ENCODE measurements at regions of chr9 and their contacts with region 1.

Region 1: DNA sequence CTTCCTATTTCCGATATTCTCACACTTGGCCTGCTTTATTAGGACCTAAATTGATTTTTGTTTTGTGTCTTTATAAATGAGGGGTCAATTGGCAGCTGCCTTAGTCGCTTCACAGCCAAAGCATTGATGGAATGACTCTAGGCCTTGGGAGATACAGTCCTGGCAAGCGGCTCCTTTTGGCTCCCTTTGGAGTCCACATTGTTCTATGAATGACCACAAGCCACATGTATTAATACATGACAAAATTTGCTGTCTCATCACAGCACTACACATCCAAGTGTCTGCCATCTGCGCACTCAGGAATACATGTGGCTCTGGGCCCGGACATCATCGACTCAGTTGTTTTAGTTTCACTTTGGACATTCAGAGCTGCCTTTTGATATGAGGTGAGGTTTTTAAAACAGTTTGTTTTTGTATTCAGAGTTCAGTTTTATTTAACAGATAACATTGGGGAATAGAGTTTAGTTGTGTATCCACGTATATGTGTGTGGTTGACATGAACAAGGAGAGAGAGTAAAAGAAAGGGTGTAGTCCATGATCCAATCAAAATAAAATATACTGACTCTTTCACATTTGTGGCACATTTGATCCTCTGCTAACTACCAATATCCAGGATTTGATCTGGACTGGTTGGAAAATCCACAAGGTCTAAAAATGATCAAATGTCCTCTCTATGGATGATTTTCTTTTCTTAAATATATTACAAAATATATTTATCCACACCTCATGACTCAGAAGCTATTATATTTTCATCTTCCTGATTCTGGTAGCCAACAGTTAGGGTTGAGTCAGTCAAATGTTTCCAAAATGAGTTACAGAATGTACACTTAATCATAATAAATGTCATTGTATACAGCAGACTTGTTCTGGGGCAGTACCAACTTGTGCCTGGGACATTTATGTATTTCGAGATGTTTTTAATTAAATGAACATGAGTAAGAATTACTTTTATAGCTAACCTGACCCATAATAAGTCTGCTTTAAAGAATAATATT is 114.0 kb upstream of the MTAP start:
- DNase-seq: no peak
- H3K4me3 ChIP-seq: no peak overlapping the region
- H3K27ac ChIP-seq: no peak overlapping the region
- H3K4me1 ChIP-seq: no peaks in the 10 kb centered on the region
- H3K27me3 ChIP-seq: no peaks in the 10 kb centered on the region
- CTCF ChIP-seq: no peak

Region 2: DNA sequence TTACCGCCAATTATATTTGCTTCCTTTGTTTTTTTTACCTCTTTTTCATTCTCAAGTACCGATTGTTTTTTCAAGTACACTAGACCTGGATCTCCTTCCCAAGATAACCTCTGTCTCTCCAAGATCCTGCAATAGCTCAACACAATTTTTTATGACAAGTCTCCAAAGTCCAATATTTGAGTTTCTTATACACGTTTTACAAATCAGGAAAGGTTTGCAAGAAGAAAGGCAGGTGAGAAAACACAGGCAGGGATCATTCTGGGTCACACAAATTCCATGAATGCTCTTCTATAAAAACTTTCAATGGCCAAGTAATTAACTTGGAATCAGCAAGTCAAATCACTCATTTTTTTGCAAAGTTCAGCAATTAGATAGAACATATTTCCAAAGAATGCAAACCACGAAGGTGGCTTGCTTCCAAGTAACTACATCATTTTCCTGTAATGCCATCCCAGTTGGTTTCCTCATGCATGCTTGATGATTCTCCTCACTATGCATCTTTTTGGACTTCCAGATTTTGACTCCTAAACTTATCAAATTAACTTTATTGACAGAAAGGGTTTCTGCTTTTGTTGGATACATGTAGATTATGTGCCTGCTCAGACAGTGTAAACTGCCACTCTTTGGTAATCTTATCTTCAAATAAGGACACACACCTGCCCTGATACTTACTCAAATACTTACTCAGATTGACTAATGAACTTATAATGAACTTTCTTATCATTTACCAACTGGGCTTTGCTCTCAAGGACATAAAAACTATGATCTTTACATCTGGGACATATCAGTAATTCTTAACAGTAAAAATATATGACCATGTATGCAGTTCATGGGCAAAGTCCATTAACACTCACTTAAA is 181.6 kb before region 1 on chr9:
- intact Hi-C with region 1: loop called (anchors 10 kb)
- DNase-seq: no peak
- H3K4me3 ChIP-seq: no peak overlapping the region
- H3K27ac ChIP-seq: no peak overlapping the region
- H3K4me1 ChIP-seq: no peaks in the 10 kb centered on the region
- H3K27me3 ChIP-seq: no peaks in the 10 kb centered on the region
- CTCF ChIP-seq: no peak

Region 3: GRCh38 chr9:21542787-21543186 is 145.6 kb before region 1 on chr9:
- intact Hi-C with region 1: no loop called
- DNase-seq: no peak
- H3K4me3 ChIP-seq: no peak overlapping the region
- H3K27ac ChIP-seq: no peak overlapping the region
- H3K4me1 ChIP-seq: no peaks in the 10 kb centered on the region
- H3K27me3 ChIP-seq: no peaks in the 10 kb centered on the region
- CTCF ChIP-seq: no peak

Region 4: DNA sequence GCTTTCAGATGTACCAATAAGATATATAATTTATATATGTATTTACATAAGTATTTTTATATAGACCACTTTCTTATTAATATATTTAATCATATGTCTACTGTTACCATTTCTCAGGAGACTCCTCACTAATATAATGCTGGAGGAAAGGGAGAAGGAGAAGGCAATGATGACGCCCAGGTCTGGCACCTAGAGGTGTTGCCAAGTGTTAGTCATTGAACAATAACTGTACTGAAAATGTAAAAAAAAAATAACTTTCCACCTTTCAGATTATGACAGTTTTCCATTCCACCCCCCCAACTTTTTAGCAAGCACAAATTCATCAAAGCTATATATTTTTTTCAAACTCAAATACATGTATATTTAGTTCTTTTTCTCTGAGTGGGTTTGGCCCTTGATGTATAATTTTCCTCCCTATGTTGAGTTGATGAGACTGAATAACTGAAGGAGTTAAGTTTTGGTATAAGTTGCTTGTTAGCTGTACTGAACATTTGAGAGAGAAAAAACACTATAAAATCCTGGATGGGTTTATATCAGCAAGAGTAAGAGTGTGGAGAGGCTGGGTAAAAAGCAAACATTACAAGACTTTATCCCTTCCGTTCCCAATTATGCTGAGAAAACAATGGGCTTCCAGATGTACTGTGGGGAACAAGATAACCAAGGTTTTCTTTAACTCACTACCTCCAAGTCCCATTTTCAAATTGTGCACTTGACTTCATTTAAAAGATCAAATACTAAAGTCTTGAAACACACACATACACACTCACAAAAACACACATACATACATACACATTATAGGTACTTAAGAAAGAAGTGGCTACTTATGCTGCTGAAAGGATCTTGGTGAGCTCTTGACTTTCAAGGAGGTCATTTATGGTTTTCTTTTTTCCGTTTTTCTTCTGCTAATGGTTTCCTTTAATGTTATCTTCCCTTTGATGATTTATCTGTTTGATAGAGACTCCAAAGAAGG is 63.4 kb before region 1 on chr9:
- intact Hi-C with region 1: no loop called
- DNase-seq: no peak
- H3K4me3 ChIP-seq: no peak overlapping the region
- H3K27ac ChIP-seq: no peak overlapping the region
- H3K4me1 ChIP-seq: no peaks in the 10 kb centered on the region
- H3K27me3 ChIP-seq: no peaks in the 10 kb centered on the region
- CTCF ChIP-seq: no peak

Measured in colonic mucosa (tissue), 4 donors.